ENCODE measurements at regions of chr1 and their contacts with region 1.

Region 1: GRCh38 chr1:12124693-12125421 is 41.9 kb upstream of the TNFRSF1B start:
- DNase-seq: peak; percentile 46
- H3K4me3 ChIP-seq: no peak overlapping the region
- H3K27ac ChIP-seq: no peak overlapping the region
- H3K27me3 ChIP-seq: peaks cover 8% of the 10 kb centered on the region
- CTCF ChIP-seq: peak; percentile 96

Region 2: DNA sequence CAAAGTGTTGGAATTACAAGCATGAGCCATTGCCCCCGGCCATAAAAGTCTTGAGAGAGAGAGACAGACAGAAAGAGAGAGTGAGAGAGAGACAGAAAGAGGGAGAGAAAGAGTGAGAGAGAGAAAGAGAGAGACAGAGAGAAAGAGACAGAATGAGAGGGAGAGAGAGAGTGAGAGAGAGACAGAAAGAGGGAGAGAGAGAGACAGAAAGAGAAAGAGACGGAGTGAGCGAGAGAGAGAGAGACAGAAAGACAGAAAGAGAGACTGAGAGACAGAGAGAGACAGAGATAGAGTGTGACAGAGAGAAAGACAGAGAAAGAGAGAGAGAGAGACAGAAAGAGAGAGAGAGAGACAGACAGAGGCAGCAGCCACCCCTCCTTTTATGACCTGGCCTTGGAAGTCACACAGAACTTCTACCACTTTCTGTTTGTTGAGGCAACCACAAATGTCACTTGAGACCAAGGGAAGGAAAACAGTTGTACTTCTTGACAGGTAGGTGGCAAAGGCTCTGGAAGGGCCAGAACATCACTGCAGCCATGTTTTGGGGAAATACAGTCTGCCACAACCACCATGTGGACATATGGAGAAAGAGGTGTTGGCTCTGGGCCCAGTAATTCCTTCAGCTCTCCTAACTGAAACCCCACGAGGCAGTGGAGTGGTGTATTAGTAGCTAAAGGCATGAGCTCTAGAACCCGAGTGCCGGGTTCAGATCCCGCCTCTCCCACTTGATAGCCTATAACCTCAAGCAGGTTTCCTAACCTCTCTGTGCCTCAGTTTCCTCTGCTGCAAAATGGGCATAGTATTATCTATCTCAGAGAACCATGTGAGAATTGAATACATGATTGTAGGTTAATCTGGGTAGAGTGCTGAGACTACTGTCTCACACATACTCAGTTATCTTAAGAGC is 11.2 kb before region 1 on chr1:
- CTCF ChIA-PET with region 1: interaction called, 12 read pairs
- POLR2A ChIA-PET with region 1: no interaction called
- DNase-seq: peak; percentile 38
- H3K4me3 ChIP-seq: no peak overlapping the region
- H3K27ac ChIP-seq: no peak overlapping the region
- H3K27me3 ChIP-seq: peaks cover 7% of the 10 kb centered on the region
- CTCF ChIP-seq: peak; percentile 20

Region 3: GRCh38 chr1:12161662-12162458 is 37.0 kb after region 1 on chr1:
- CTCF ChIA-PET with region 1: interaction called, 10 read pairs
- POLR2A ChIA-PET with region 1: interaction called, 3 read pairs
- DNase-seq: peak; percentile 42
- H3K4me3 ChIP-seq: no peak overlapping the region
- H3K27ac ChIP-seq: peak overlapping the region; percentile 11
- H3K27me3 ChIP-seq: no peaks in the 10 kb centered on the region
- CTCF ChIP-seq: no peak

Region 4: GRCh38 chr1:12196641-12197482 is 72.0 kb after region 1 on chr1:
- CTCF ChIA-PET with region 1: interaction called, 36 read pairs
- POLR2A ChIA-PET with region 1: interaction called, 6 read pairs
- DNase-seq: no peak
- H3K4me3 ChIP-seq: no peak overlapping the region
- H3K27ac ChIP-seq: no peak overlapping the region
- H3K27me3 ChIP-seq: no peaks in the 10 kb centered on the region
- CTCF ChIP-seq: 0 out of 2 replicates have a peak, but pooled peaks have one; percentile 7

Region 5: DNA sequence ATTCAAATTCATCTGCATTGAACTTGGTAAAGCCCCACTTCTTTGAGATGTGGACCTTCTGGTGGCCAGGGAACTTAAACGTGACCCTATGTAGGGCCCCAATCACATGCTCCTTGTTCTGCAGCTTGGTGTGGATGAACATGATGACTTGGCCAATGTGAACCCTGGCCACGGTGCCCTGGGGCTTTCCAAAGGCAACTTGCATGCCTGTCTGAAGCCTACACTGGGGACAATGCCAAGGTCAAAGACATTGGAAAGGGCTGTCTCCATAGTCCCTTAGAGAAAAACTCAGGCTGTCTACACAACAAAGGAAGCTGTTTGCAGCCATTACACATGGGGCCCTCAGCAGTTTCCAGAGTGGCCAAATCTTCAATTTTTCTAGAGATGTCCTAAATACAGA is 96.0 kb after region 1 on chr1:
- CTCF ChIA-PET with region 1: interaction called, 18 read pairs
- POLR2A ChIA-PET with region 1: no interaction called
- DNase-seq: no peak
- H3K4me3 ChIP-seq: no peak overlapping the region
- H3K27ac ChIP-seq: no peak overlapping the region
- H3K27me3 ChIP-seq: peaks cover 17% of the 10 kb centered on the region
- CTCF ChIP-seq: no peak

Region 6: DNA sequence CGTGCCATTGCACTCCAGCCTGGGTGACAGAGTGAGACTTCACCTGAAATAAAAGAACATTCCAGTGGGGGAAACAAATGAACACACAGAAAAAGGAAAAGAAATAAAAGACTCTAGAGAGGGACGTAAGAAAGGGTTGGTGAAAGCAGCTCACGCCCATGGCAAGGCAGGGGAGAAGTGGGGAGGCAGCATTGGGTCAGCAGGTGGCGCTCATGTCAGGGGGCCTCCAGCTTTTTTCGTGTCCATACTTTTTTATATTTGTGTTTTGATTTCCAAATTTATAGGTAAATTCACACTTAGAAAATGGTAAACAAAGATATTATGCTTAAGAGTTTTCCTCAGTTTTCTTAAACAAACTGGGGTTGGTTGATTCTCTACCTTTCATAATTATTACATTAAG is 150.5 kb after region 1 on chr1:
- CTCF ChIA-PET with region 1: interaction called, 32 read pairs
- POLR2A ChIA-PET with region 1: no interaction called
- DNase-seq: no peak
- H3K4me3 ChIP-seq: no peak overlapping the region
- H3K27ac ChIP-seq: no peak overlapping the region
- H3K27me3 ChIP-seq: no peaks in the 10 kb centered on the region
- CTCF ChIP-seq: peak; percentile 81

Measured in AG04450 (cell line).